Activated CD8-positive, alpha-beta memory T cell treated with anti-CD3 and anti-CD28 coated beads, Interleukin-2, amount 10 ng/mL, durations not matched to agents 7 days and 5 days (primary cell): ENCODE measurements at regions of chr10 and their contacts with region 1.

Region 1: DNA sequence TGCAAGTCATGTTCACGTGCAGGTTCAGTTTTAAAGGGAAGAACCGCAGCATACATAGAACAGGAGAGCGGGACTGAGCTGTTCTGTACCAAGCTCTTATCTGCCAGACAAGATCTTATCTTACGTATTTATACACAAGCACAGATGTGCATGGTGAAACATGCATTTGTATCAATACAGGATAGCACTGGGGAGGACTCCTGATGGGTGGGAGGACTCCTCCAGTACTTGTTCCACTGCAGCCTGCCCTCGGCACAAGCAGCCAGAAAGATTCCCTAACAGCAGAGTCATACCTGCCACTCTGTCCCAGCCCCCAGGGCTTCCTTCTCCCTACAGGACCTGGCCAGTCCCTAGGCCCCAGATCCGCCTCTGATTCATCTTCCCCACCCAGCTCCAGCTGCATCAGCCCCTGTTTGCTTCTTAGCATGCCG is 13.2 kb upstream of the PRKCQ start:
- DNase-seq: no peak
- ATAC-seq: peak; percentile 25
- H3K4me3 Mint-ChIP-seq: no peak overlapping the region
- H3K27ac Mint-ChIP-seq: peak overlapping the region; percentile 25
- H3K4me1 Mint-ChIP-seq: peaks cover 66% of the 10 kb centered on the region
- H3K27me3 Mint-ChIP-seq: no peaks in the 10 kb centered on the region

Region 2: DNA sequence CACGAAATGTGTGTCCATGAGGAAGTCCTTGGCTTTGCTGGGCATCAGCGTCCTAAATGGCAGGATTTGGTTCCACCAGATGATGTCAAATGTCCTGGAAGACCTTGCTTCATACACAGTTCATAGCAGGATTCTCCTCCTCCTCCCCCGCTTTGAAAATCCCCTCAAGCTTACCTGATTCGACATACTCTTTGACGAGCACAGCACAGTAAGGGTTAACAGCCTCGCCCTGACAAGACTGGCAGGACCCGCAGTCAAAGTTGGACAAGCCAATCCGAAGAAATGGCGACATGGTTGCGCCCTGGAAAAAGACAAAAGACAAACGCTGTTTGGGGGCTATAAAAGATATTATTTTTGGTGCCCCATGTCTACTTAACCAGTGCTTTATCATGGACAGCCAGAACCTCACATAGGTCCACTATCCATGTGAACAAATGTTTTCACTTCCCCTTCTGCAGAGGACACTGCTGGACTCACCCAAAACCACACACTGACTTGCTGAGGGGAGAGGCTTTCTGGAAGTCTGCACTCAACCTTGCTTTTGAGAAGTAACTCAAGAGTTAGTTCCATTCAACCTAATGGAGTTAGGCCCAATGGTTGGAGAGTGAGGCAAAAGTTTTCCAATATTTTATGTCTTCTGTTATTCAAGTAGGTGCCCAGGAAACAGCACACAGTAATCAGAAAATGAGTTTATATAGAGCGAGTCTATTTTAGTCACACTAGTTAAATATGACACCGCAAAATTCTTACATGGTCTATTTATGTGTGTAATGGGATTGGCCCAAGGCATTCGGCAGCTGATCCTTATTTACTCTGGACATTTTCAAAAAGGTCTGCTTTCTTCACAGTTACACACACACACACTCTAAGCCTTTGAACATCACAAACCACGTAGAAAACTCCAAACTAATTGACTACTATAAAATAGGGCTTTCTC is 78.1 kb before region 1 on chr10:
- CTCF ChIA-PET with region 1: no interaction called
- DNase-seq: no peak
- ATAC-seq: no peak
- H3K4me3 Mint-ChIP-seq: no peak overlapping the region
- H3K27ac Mint-ChIP-seq: no peak overlapping the region
- H3K4me1 Mint-ChIP-seq: peaks cover 70% of the 10 kb centered on the region
- H3K27me3 Mint-ChIP-seq: no peaks in the 10 kb centered on the region

Region 3: DNA sequence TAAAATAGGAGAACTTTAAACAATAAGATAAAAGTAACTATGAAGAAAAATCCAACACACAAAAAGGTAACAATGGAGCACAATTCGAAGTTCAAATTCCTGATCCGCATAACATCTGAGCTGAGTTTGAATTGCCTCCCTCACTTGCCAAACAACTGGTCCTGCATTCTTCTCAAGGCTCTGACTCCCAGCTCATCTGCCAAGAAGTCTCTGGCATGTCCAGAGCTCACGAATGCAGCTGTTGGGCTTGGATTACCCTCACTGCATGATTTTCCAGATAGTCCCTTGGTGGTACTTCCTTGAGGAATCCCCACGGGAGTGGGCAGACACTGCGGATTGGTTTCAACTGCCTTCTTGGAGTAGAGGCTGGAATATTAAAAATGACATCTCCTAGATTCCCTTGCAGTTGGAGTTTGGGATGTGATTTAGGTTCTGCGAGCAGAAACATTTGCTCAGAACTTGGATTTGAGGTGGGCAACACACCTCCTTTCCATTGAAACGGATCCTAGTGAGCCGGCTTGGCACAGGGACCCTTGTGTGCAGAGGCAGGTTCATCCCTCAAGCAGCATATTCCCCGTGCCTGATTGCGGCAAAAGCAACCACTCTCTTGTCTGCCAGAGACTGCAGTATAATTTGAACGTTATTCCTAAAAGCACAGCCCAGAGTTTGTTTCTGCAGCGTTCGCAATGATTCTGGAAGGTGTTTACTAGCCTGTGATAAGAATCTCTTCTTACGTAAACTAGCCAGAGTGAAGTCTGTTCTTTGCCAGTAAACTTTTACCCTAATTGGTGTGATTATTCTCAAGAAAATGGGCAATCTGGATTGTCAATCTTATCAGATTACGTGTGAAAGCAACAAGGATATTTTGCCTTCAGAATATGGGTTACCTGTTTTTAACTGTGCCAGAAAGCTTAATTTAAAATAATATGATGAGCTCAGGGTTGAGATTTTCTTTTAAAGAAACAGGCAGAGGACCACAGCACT is 10.2 kb after region 1 on chr10:
- CTCF ChIA-PET with region 1: interaction called, 12 read pairs
- DNase-seq: no peak
- ATAC-seq: no peak
- H3K4me3 Mint-ChIP-seq: no peak overlapping the region
- H3K27ac Mint-ChIP-seq: no peak overlapping the region
- H3K4me1 Mint-ChIP-seq: peaks cover 60% of the 10 kb centered on the region
- H3K27me3 Mint-ChIP-seq: no peaks in the 10 kb centered on the region